CD8-positive, alpha-beta memory T cell (primary cell): ENCODE measurements at regions of chr7 and their contacts with region 1.

Region 1: DNA sequence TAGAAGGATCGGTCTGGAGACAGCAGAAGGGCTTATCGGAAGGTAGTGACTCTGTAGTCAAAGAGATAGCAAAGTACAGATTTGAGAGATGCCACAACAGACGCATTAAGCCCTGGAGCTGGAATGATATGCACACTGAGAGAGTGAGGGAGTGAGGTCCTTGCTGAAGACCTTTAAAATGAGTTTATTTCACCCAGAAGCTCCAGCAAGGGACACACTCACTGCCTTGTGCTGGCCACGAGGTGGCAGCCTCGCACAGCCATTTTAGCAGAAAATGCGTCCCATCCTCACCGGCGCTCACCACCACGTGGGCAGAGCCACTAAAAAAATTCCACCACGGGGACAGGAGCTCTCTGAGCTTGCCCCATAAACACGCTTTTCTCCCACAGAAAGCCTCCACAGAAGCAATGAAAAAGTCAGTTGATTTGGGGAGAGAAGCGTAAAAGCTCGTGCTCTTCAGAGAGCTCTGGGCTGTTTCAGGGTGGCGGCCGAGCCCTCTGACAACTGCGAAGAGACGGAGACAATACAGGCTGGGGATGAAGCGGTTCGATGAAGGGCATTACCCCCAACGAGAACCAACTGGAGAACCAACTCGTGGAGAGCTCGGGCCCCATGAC is 163.0 kb upstream of the KLF14 start:
- DNase-seq: peak; percentile 63 to 82 (median 66)
- H3K4me3 ChIP-seq: no peak overlapping the region
- H3K4me3 Mint-ChIP-seq: peak overlapping the region; percentile 13 to 65 (median 38)
- H3K27ac ChIP-seq: no peak overlapping the region
- H3K27ac Mint-ChIP-seq: peak overlapping the region in 7 of 8 donors; percentile 76 to 94 (median 91)
- H3K4me1 ChIP-seq: peaks cover 42% of the 10 kb centered on the region
- H3K4me1 Mint-ChIP-seq: peaks cover 66 to 95% (median 82%) of the 10 kb centered on the region in 3 donors
- H3K27me3 ChIP-seq: no peaks in the 10 kb centered on the region
- H3K27me3 Mint-ChIP-seq: peaks cover 0 to 3% of the 10 kb centered on the region in 2 donors

Region 2: DNA sequence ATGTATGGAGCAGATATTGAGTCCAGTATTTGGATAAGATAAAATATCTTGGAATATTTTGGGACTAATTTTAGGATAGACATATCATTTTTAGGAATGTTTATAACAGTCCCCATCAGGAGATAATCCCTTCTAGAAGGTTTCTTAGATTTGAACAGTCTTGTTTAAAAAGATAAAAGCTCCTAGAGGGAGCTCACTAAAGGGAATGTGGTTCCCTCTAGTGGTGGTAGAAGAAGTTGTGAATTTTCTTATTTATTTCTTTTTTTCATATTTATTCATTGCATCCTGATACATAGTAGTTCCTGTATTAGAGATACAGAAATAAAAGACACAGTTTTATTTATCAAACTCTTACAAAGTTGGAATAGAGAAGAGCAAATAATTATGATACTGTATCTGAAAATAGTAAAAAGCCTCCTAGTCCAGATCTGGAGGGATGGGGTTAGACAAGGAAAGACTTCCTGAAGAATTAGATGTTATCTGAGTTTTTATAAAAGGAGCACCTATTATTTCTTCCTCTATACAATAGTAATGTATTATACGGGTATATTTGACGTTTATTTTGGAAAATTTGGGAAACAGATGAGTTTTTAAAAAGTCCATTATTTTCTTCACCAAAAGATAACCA is 138.5 kb before region 1 on chr7:
- CTCF ChIA-PET with region 1: no interaction called
- POLR2A ChIA-PET with region 1: no interaction called
- DNase-seq: peak in 2 of 5 donors; percentile 16 to 34
- H3K4me3 ChIP-seq: no peak overlapping the region
- H3K4me3 Mint-ChIP-seq: no peak overlapping the region
- H3K27ac ChIP-seq: no peak overlapping the region
- H3K27ac Mint-ChIP-seq: no peak overlapping the region
- H3K4me1 ChIP-seq: no peaks in the 10 kb centered on the region
- H3K4me1 Mint-ChIP-seq: no peaks in the 10 kb centered on the region
- H3K27me3 ChIP-seq: no peaks in the 10 kb centered on the region
- H3K27me3 Mint-ChIP-seq: peaks cover 0 to 7% of the 10 kb centered on the region in 2 donors

Region 3: GRCh38 chr7:130881091-130881798 is 15.8 kb before region 1 on chr7:
- CTCF ChIA-PET with region 1: interaction called, 16 read pairs
- POLR2A ChIA-PET with region 1: no interaction called
- DNase-seq: no peak
- H3K4me3 ChIP-seq: no peak overlapping the region
- H3K4me3 Mint-ChIP-seq: peak overlapping the region in 1 of 7 donors; percentile 6
- H3K27ac ChIP-seq: no peak overlapping the region
- H3K27ac Mint-ChIP-seq: peak overlapping the region in 4 of 8 donors; percentile 2 to 75 (median 31)
- H3K4me1 ChIP-seq: peaks cover 13% of the 10 kb centered on the region
- H3K4me1 Mint-ChIP-seq: peaks cover 21 to 69% (median 41%) of the 10 kb centered on the region in 3 donors
- H3K27me3 ChIP-seq: no peaks in the 10 kb centered on the region
- H3K27me3 Mint-ChIP-seq: no peaks in the 10 kb centered on the region

Region 4: DNA sequence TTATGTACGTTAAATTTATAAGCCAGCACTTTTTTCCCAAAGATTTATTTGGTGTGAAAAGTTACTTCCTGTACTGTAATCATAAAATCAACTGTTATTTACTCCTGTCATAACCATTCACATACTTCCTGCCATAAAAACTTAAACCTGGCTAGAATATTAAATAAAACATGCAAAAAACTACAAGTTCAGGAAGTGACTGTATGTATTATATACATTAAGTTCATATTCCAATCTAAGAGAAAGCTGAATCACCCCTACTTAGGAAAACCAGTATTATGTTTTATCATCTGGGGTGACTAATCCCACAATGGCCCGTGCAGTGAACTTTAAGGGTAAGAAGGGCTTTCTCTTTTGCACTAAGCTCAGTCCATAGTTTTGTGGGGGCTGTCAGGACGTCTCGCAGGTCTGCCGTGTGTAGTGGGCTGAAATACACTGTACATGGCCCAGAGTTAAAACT is 20.7 kb after region 1 on chr7:
- CTCF ChIA-PET with region 1: interaction called, 16 read pairs
- POLR2A ChIA-PET with region 1: no interaction called
- DNase-seq: no peak
- H3K4me3 ChIP-seq: no peak overlapping the region
- H3K4me3 Mint-ChIP-seq: peak overlapping the region; percentile 37 to 82 (median 51)
- H3K27ac ChIP-seq: no peak overlapping the region
- H3K27ac Mint-ChIP-seq: peak overlapping the region; percentile 70 to 96 (median 80)
- H3K4me1 ChIP-seq: peaks cover 60% of the 10 kb centered on the region
- H3K4me1 Mint-ChIP-seq: peaks cover 73 to 98% (median 94%) of the 10 kb centered on the region in 3 donors
- H3K27me3 ChIP-seq: no peaks in the 10 kb centered on the region
- H3K27me3 Mint-ChIP-seq: peaks cover 0 to 4% of the 10 kb centered on the region in 2 donors

Region 5: DNA sequence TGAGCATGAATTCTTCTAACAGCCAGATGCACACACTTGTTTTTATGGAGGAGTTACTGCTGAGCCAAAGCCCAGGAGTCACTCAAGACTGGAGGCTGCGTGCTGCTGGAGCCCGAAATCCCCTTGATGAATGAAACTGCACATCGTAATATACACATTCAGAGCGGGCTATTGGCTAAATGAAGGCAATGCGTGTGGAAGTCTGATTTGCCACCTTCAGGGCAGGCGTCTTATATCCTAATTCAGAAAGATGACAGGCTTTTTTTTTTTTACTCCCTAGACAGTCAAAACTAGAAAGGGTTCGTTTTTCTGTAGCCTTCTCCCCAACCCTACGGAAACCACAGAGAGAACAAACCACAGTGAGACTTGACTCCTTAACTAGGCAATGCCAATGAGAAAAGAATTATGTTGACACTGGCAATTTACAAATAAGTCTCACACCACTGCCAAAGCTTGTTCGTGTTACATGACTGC is 64.2 kb after region 1 on chr7:
- CTCF ChIA-PET with region 1: interaction called, 11 read pairs
- POLR2A ChIA-PET with region 1: interaction called, 4 read pairs
- DNase-seq: peak; percentile 55 to 86 (median 78)
- H3K4me3 ChIP-seq: peak overlapping the region; percentile 57
- H3K4me3 Mint-ChIP-seq: peak overlapping the region; percentile 87 to 92 (median 88)
- H3K27ac ChIP-seq: peak overlapping the region; percentile 69
- H3K27ac Mint-ChIP-seq: peak overlapping the region in 7 of 8 donors; percentile 95 to 100 (median 99)
- H3K4me1 ChIP-seq: peaks cover 54% of the 10 kb centered on the region
- H3K4me1 Mint-ChIP-seq: peaks cover 4 to 66% (median 7%) of the 10 kb centered on the region in 3 donors
- H3K27me3 ChIP-seq: no peaks in the 10 kb centered on the region
- H3K27me3 Mint-ChIP-seq: no peaks in the 10 kb centered on the region

Region 6: GRCh38 chr7:130988443-130988842 is 91.4 kb after region 1 on chr7:
- CTCF ChIA-PET with region 1: interaction called, 15 read pairs
- POLR2A ChIA-PET with region 1: no interaction called
- DNase-seq: peak in 3 of 5 donors; percentile 49 to 61 (median 53)
- H3K4me3 ChIP-seq: no peak overlapping the region
- H3K4me3 Mint-ChIP-seq: peak overlapping the region in 6 of 7 donors; percentile 9 to 55 (median 35)
- H3K27ac ChIP-seq: peak overlapping the region; percentile 61
- H3K27ac Mint-ChIP-seq: peak overlapping the region; percentile 44 to 99 (median 92)
- H3K4me1 ChIP-seq: peaks cover 82% of the 10 kb centered on the region
- H3K4me1 Mint-ChIP-seq: peaks cover 29 to 79% (median 32%) of the 10 kb centered on the region in 3 donors
- H3K27me3 ChIP-seq: no peaks in the 10 kb centered on the region
- H3K27me3 Mint-ChIP-seq: peaks cover 0 to 1% of the 10 kb centered on the region in 2 donors

Region 7: GRCh38 chr7:131007394-131008330 is 110.7 kb after region 1 on chr7:
- CTCF ChIA-PET with region 1: interaction called, 18 read pairs
- POLR2A ChIA-PET with region 1: interaction called, 10 read pairs
- DNase-seq: peak in 4 of 5 donors; percentile 53 to 61 (median 56)
- H3K4me3 ChIP-seq: no peak overlapping the region
- H3K4me3 Mint-ChIP-seq: peak overlapping the region; percentile 11 to 63 (median 39)
- H3K27ac ChIP-seq: peak overlapping the region; percentile 20
- H3K27ac Mint-ChIP-seq: peak overlapping the region; percentile 80 to 96 (median 91)
- H3K4me1 ChIP-seq: peaks cover 63% of the 10 kb centered on the region
- H3K4me1 Mint-ChIP-seq: peaks cover 78 to 98% (median 97%) of the 10 kb centered on the region in 3 donors
- H3K27me3 ChIP-seq: no peaks in the 10 kb centered on the region
- H3K27me3 Mint-ChIP-seq: no peaks in the 10 kb centered on the region